Activated naive CD4-positive, alpha-beta T cell treated with anti-CD3 and anti-CD28 coated beads for 36 hours (primary cell): ENCODE measurements at regions of chr11 and their contacts with region 1.

Region 1: DNA sequence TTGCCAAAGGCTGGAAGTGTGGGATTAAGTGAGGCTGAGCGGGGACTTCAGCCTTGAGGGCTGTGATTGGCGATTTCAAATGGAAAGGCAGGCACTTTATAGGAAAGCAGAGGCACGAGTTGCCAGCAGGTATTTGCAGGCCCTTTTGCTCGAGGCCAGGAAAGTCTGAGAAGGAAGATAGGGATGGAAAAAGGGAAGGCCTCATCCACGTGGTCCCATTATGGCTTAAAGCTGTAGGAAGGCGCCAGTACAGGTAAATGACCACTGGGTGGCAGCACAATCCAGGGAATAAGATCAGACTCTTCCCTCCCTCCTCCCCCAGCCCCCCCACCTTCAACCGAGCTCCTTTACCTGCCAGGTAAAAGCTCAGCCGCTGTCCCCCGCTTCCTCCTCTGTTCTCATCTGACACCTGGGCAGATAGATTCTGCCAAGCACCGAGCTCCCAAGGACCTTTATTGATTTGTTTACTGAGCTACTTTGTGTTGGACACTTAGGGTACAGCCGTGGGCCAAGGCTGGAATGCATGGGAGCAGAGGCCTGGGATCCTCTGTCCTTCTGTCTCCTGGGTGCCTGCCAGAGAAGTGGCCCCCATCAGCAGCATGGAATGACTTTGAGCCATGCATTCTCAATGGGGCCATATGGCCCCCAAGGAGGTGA is 7.5 kb downstream of the P2RX3 start:
- DNase-seq: peak; percentile 81
- H3K4me3 Mint-ChIP-seq: no peak overlapping the region
- H3K27ac Mint-ChIP-seq: no peak overlapping the region
- H3K4me1 Mint-ChIP-seq: peaks cover 3% of the 10 kb centered on the region
- H3K27me3 Mint-ChIP-seq: no peaks in the 10 kb centered on the region

Region 2: DNA sequence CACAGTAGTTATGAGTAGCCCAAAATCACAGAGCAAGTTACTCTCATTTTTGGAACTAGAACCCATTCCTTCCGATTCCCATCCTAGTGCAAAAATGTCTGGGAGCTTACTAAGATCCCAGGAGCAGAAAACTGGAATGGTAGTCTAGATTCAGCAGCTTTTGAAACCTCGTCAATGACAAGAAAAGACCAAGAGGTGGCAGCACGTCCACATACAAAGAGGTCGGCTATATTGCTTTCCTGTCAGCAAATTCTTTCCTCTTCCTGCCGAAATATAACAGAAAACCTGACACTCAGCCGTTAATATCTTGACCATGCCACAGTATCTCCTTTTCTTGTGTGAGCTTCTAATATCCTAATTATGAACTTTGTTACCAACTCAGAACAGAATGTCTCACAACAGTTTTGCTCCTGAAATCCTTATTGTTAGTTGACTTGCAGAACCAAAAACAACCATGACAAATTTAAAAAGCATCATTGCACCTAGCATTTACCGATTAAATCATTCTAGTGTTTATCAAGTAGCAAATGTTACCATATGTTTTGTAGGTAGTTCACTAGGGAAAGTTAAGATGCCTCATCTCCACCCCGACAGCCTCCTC is 504.4 kb before region 1 on chr11:
- CTCF ChIA-PET with region 1: no interaction called
- intact Hi-C with region 1: loop called (anchors 5 kb)
- DNase-seq: peak; percentile 59
- H3K4me3 Mint-ChIP-seq: no peak overlapping the region
- H3K27ac Mint-ChIP-seq: no peak overlapping the region
- H3K4me1 Mint-ChIP-seq: no peaks in the 10 kb centered on the region
- H3K27me3 Mint-ChIP-seq: peaks cover 14% of the 10 kb centered on the region

Region 3: GRCh38 chr11:57131080-57131790 is 214.4 kb before region 1 on chr11:
- CTCF ChIA-PET with region 1: no interaction called
- intact Hi-C with region 1: no loop called
- DNase-seq: peak; percentile 7
- H3K4me3 Mint-ChIP-seq: no peak overlapping the region
- H3K27ac Mint-ChIP-seq: no peak overlapping the region
- H3K4me1 Mint-ChIP-seq: no peaks in the 10 kb centered on the region
- H3K27me3 Mint-ChIP-seq: peaks cover 19% of the 10 kb centered on the region

Region 4: DNA sequence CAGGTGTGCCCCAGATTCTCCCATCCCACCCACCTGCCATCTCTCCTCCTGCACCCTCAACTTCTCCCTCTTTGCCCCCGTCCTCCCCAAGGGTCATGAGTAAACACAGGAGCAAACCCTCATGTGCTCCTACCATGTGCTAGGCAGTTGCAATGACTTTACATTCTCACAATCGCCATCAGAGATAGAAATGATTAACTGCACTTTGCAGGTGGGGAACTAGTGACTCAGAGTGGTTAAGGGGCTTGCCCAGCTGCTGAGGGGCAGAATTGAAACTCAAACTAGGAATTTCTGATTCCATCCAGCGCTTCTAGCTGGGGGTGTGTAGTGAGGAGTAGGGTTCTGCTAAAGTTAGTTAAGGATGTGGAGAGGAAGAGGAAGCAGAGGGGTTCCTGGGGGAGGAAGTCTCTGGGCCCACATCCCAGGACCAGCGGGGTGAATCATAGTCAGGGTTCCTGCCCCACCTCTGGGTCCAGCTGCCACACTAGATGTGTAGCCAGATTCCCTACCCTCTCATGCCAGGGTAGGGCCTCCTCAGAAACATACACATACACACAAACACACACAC is 60.7 kb after region 1 on chr11:
- CTCF ChIA-PET with region 1: interaction called, 10 read pairs
- intact Hi-C with region 1: no loop called
- DNase-seq: peak; percentile 75
- H3K4me3 Mint-ChIP-seq: no peak overlapping the region
- H3K27ac Mint-ChIP-seq: peak overlapping the region; percentile 78
- H3K4me1 Mint-ChIP-seq: peaks cover 60% of the 10 kb centered on the region
- H3K27me3 Mint-ChIP-seq: no peaks in the 10 kb centered on the region

Region 5: DNA sequence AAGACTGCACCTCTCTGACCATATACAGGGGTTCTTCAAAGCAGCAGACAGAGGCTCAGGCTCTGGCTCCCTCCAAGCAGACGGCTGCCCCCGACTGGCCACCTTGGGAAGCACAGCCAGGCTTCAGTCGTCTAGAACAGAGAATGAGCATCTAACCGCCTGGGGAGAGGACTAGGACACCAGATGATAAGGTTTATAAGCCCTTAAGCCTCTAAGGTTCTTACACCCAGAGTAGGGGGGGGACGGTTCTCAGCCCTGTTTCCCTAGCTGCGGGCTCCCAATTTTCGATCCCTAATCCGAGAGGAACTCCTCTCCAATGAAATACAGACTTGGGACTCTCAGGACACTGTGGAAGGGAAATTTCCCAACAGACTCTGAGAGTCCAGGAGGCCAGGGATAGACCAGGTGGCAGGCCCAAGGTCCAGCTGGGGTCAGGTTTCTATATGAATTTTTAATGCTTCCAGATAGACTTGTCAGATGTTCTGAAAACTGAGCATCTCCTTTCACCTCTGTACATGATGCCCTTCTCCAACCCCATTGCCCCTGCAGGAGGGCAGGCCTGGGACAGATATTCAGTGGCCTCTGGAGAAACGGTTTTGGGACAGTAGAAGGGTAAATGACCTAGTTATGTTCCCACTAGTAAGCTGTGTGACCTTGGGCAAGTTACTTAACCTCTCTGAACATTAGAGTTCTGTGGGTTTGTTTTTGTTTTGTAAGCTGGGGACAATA is 134.9 kb after region 1 on chr11:
- CTCF ChIA-PET with region 1: interaction called, 12 read pairs
- intact Hi-C with region 1: loop called (anchors 1 kb)
- DNase-seq: peak; percentile 87
- H3K4me3 Mint-ChIP-seq: no peak overlapping the region
- H3K27ac Mint-ChIP-seq: no peak overlapping the region
- H3K4me1 Mint-ChIP-seq: peaks cover 22% of the 10 kb centered on the region
- H3K27me3 Mint-ChIP-seq: peaks cover 16% of the 10 kb centered on the region

Region 6: DNA sequence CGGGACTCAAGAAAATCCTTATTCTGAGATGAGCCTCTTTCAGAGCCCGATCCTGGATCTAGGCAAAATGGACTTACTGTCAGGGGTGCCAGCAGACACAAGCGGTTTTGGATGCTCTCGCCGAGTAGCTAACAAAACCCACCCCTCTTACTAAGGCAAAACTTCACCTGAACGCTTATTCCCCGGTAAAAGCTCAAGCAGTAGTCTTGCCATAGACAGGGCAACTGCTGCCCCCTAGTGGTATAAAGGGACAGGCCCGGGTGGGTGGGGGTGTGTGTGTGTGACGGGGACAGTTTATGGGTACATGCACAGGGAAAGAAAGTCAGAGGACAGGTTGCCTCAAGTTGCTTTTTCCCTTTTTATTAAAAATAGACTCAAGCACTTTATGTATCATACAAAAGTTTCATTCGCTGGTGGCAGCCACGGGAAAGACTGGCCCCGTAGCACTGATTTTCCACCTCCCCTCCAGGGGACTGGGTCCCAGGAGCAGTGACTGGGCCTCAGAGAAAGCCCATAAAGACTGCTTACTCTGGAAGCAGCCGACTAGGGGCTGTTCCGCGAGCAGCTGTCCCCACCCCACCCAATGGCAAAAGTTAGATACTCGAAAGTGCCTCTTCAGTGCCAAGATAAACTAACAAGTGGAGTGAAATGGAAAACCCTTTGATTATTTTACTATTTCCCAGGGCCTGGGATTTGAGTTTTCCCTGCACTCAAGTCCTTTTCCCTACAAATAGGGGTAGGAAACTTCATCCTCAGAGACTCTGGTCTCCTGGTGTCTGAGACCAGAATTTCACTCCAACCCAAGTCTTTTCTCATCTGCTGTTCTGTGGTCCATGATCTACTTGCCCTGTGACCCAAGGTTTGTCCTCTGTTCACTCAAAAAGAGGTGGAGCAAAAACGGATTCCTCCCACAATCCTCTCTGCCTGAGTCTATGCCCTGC is 299.3 kb after region 1 on chr11:
- CTCF ChIA-PET with region 1: interaction called, 28 read pairs
- intact Hi-C with region 1: loop called (anchors 1 kb)
- DNase-seq: peak; percentile 94
- H3K4me3 Mint-ChIP-seq: no peak overlapping the region
- H3K27ac Mint-ChIP-seq: no peak overlapping the region
- H3K4me1 Mint-ChIP-seq: peaks cover 35% of the 10 kb centered on the region
- H3K27me3 Mint-ChIP-seq: peaks cover 39% of the 10 kb centered on the region

Region 7: GRCh38 chr11:58513747-58514367 is 1168.2 kb after region 1 on chr11:
- CTCF ChIA-PET with region 1: no interaction called
- intact Hi-C with region 1: loop called (anchors 5 kb)
- DNase-seq: peak; percentile 38
- H3K4me3 Mint-ChIP-seq: no peak overlapping the region
- H3K27ac Mint-ChIP-seq: no peak overlapping the region
- H3K4me1 Mint-ChIP-seq: no peaks in the 10 kb centered on the region
- H3K27me3 Mint-ChIP-seq: no peaks in the 10 kb centered on the region